Sigmoid colon (tissue), 7 donors: ENCODE measurements at regions of chr6 and their contacts with region 1.

Region 1: GRCh38 chr6:5003604-5004372 is at the start of gene RPP40:
- DNase-seq: peak; percentile 98
- H3K4me3 ChIP-seq: peak within 1 kb of the TSS; percentile 47 to 67 (median 58)
- H3K27ac ChIP-seq: peak within 1 kb of the TSS; percentile 89 to 96 (median 91)
- H3K4me1 ChIP-seq: peaks cover 0 to 8% (median 7%) of the 10 kb centered on the region in 4 donors
- H3K27me3 ChIP-seq: no peaks in the 10 kb centered on the region
- CTCF ChIP-seq: peak; percentile 56 to 94 (median 90)
- EP300 ChIP-seq: no peak
- POLR2A ChIP-seq: no peak
- total RNA-seq, gene RPP40: 4.2 to 9.7 (median 7.2) TPM

Region 2: DNA sequence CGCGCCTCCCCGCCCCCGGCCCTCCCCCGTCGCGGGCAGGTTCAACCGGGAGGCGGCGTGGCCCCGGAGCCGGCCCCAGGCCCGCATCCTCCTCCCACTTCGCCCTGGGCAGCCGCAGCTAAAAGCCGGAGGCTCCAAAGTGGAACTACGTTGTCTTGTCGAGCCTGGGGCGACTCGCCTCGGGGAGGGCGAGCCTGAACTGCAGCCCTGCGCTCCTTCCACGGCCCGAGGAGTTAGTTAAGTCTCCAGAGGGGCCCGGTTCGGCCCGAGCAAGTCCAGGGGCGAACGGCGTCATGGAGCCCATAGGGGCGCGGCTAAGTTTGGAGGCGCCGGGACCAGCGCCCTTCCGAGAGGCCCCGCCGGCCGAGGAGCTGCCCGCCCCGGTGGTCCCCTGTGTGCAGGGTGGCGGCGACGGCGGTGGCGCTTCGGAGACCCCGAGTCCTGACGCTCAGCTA is 81.4 kb after region 1 on chr6 and contains the start of gene PPP1R3G:
- intact Hi-C with region 1: loop called (anchors 2 kb)
- DNase-seq: peak; percentile 82
- H3K4me3 ChIP-seq: peak within 1 kb of the TSS; percentile 51 to 73 (median 64)
- H3K27ac ChIP-seq: peak within 1 kb of the TSS; percentile 73 to 86 (median 83)
- H3K4me1 ChIP-seq: peaks cover 0 to 25% (median 16%) of the 10 kb centered on the region in 4 donors
- H3K27me3 ChIP-seq: no peaks in the 10 kb centered on the region
- CTCF ChIP-seq: no peak
- EP300 ChIP-seq: no peak
- POLR2A ChIP-seq: no peak
- total RNA-seq, gene PPP1R3G: 1.8 to 3.0 (median 2.2) TPM